ENCODE measurements at regions of chr22 and their contacts with region 1.

Region 1: GRCh38 chr22:24189249-24190158 is 8.2 kb downstream of the SUSD2 start:
- DNase-seq: peak; percentile 60 to 93 (median 78)
- ATAC-seq: peak; percentile 94
- H3K4me3 ChIP-seq: no peak overlapping the region
- H3K27ac ChIP-seq: peak overlapping the region; percentile 51 to 53
- H3K4me1 ChIP-seq: peaks cover 9 to 22% of the 10 kb centered on the region in 2 donors
- H3K27me3 ChIP-seq: no peaks in the 10 kb centered on the region
- CTCF ChIP-seq: peak; percentile 79 to 87

Region 2: GRCh38 chr22:24247011-24247507 is 57.6 kb after region 1 on chr22:
- intact Hi-C with region 1: loop called in 1 of 2 experiments (anchors 5 kb)
- DNase-seq: no peak
- ATAC-seq: peak; percentile 12
- H3K4me3 ChIP-seq: no peak overlapping the region
- H3K27ac ChIP-seq: peak overlapping the region; percentile 78 to 79
- H3K4me1 ChIP-seq: peaks cover 46% of the 10 kb centered on the region in 2 donors
- H3K27me3 ChIP-seq: no peaks in the 10 kb centered on the region
- CTCF ChIP-seq: no peak